ENCODE measurements at regions of chr3 and their contacts with region 1.

Region 1: GRCh38 chr3:39288300-39288808 is 8.5 kb upstream of the CX3CR1 start:
- DNase-seq: peak; percentile 78 to 83 (median 82)
- ATAC-seq: peak; percentile 70 to 86 (median 75)
- H3K4me3 ChIP-seq: no peak overlapping the region
- H3K27ac ChIP-seq: peak overlapping the region in 1 of 3 donors; percentile 14
- H3K4me1 ChIP-seq: peaks cover 0 to 49% (median 18%) of the 10 kb centered on the region in 4 donors
- H3K27me3 ChIP-seq: no peaks in the 10 kb centered on the region
- CTCF ChIP-seq: peak; percentile 90 to 94 (median 92)
- POLR2A ChIP-seq: no peak

Region 2: DNA sequence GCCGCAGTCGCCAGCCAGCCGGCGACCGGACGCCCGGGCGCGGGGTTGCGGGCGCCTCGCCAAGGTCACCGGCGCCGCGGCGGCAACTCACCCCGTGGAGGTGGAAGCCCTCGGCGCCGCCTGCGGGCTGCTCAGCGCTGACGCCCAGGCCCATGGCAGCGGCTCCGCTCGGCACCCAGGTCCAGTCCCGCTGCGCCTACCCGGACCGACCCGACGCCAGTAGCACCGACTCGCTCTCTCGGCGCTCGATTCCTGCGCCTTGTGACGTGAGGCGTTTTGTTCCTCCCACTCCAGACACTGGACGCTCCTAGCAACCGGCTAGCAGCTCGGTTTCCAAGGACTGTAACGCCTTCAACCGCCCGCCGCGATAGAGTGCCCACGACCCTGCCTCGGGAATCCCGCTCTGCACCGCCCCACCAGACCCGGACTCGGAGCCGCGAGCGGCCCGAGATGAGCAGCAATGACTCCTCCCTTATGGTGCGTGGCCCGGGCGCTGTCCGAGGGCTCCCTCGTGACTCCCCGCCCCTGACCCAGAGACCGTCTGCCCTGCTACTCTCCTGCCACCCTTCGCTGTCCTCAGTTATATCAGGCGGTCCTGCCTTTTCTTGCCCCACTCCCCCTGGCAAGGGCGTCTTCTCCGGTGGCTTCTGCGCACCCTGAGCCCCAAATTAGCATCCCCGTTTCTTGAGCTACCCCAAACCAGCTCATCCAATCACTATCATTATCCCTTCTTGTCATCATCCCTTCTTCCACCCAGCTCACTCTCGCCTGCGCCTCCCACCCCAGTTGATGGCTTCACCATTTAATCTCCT is 180.8 kb before region 1 on chr3 and contains the starts of genes GORASP1 and TTC21A:
- intact Hi-C with region 1: loop called in 1 of 2 experiments (anchors 10 kb)
- DNase-seq: peak; percentile 90 to 94 (median 94)
- ATAC-seq: peak; percentile 90 to 93 (median 90)
- H3K4me3 ChIP-seq: peak within 1 kb of the TSS; percentile 69 to 96 (median 85)
- H3K27ac ChIP-seq: peak within 1 kb of the TSS; percentile 87 to 95 (median 94)
- H3K4me1 ChIP-seq: peaks cover 0 to 24% (median 8%) of the 10 kb centered on the region in 4 donors
- H3K27me3 ChIP-seq: no peaks in the 10 kb centered on the region
- CTCF ChIP-seq: peak in 2 of 4 donors; percentile 5 to 7
- POLR2A ChIP-seq: peak; percentile 84
- total RNA-seq, gene GORASP1: 27.8 to 35.5 (median 33.1) TPM
- total RNA-seq, gene TTC21A: 1.4 to 3.5 (median 2.5) TPM

Region 3: DNA sequence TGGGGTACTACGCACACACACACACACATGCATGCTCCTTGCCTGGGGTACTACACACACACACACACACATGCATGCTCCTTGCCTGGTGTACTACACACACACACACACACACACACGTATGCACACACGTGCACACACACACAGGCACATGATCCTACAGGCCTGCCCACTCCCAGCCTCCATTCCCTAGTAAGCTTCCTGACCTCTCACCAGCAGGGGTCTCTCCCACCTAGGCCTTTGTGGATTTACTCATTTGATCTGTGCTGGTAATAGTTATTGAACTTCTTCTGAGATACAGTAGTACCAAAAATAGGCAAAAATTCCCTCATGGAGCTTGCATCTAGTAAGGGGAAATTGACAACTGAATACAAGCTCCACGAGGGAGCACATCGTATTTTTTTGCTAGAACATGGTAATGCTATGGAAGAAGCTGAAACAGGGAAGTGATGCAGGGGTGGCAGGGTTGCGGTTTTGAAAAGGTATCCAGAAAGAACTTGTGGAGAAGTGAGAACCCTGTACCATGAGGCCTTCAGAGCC is 161.8 kb before region 1 on chr3:
- intact Hi-C with region 1: loop called in 1 of 2 experiments (anchors 10 kb)
- DNase-seq: peak in 1 of 3 donors; percentile 30
- ATAC-seq: peak; percentile 69 to 75 (median 74)
- H3K4me3 ChIP-seq: no peak overlapping the region
- H3K27ac ChIP-seq: no peak overlapping the region
- H3K4me1 ChIP-seq: peaks cover 0 to 6% (median 2%) of the 10 kb centered on the region in 4 donors
- H3K27me3 ChIP-seq: no peaks in the 10 kb centered on the region
- CTCF ChIP-seq: peak; percentile 31 to 47 (median 40)
- POLR2A ChIP-seq: no peak

Region 4: GRCh38 chr3:39180546-39181346 is 107.6 kb before region 1 on chr3:
- intact Hi-C with region 1: loop called (anchors 5 to 10 kb)
- DNase-seq: peak; percentile 96 to 97 (median 97)
- ATAC-seq: peak; percentile 71 to 83 (median 81)
- H3K4me3 ChIP-seq: peak overlapping the region; percentile 9 to 47 (median 17)
- H3K27ac ChIP-seq: peak overlapping the region; percentile 44 to 98 (median 57)
- H3K4me1 ChIP-seq: peaks cover 0 to 42% (median 11%) of the 10 kb centered on the region in 4 donors
- H3K27me3 ChIP-seq: no peaks in the 10 kb centered on the region
- CTCF ChIP-seq: peak in 3 of 4 donors; percentile 14 to 30 (median 19)
- POLR2A ChIP-seq: peak; percentile 68

Region 5: GRCh38 chr3:39189959-39190269 is 98.4 kb before region 1 on chr3:
- intact Hi-C with region 1: loop called (anchors 5 to 10 kb)
- DNase-seq: peak; percentile 63 to 79 (median 70)
- ATAC-seq: peak; percentile 84 to 97 (median 91)
- H3K4me3 ChIP-seq: no peak overlapping the region
- H3K27ac ChIP-seq: peak overlapping the region in 1 of 3 donors; percentile 4
- H3K4me1 ChIP-seq: no peaks in the 10 kb centered on the region
- H3K27me3 ChIP-seq: no peaks in the 10 kb centered on the region
- CTCF ChIP-seq: peak; percentile 74 to 90 (median 84)
- POLR2A ChIP-seq: no peak

Region 6: DNA sequence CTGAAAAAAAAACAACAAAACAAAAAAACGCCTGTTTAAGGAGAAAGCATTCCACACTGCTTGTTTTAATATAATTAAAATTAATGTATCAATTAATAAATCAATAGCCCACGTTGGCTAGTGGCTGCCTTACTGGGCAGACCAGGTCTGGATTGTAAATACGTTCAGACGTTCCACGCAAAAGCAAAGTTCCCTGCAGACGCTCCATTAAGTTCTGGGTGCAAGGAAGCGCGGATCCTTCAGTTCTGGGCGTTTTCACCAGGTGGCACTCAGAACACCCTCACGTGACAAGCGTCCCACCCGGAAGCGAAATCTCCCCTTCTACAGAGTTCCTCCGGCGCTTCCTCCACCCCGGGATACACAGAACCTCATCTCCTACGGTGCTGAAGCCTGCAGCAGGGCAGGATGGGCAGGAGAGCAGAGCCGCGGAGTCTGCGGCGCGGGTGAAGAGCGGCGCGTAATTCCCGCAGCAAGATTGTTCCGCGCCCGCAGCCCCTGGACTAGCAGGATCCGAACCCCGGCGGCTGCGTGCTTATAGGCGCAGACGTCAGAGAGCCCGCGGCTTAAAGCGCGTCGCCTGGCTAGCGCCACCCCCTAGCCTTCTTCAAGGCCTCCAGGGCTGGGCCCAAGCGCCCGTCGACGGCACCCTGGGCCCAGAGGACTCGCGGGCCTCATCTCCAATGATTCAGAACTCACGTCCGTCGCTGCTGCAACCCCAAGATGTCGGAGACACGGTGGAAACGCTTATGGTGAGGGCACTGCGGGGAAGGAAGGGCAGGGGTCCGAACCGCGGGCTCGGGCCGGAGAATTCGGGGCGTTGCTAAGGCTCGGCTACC is 94.9 kb after region 1 on chr3 and contains the start of gene SLC25A38:
- intact Hi-C with region 1: no loop called
- DNase-seq: peak; percentile 78 to 87 (median 87)
- ATAC-seq: peak; percentile 59 to 71 (median 68)
- H3K4me3 ChIP-seq: peak within 1 kb of the TSS; percentile 67 to 85 (median 85)
- H3K27ac ChIP-seq: peak within 1 kb of the TSS; percentile 80 to 93 (median 87)
- H3K4me1 ChIP-seq: peaks cover 0 to 52% (median 8%) of the 10 kb centered on the region in 4 donors
- H3K27me3 ChIP-seq: no peaks in the 10 kb centered on the region
- CTCF ChIP-seq: peak; percentile 26 to 42 (median 32)
- POLR2A ChIP-seq: peak; percentile 60
- total RNA-seq, gene SLC25A38: 20.9 to 36.7 (median 23.6) TPM